CD4-positive, alpha-beta T cell (primary cell): ENCODE measurements at regions of chr1 and their contacts with region 1.

Region 1: GRCh38 chr1:64539781-64540218 is 69.9 kb downstream of the CACHD1 start:
- DNase-seq: peak in 2 of 14 experiments; percentile 12 to 31
- ATAC-seq: no peak
- H3K4me3 ChIP-seq: no peak overlapping the region
- H3K4me3 Mint-ChIP-seq: no peak overlapping the region
- H3K27ac ChIP-seq: no peak overlapping the region
- H3K27ac Mint-ChIP-seq: peak overlapping the region; percentile 82
- H3K4me1 ChIP-seq: peaks cover 13% of the 10 kb centered on the region
- H3K4me1 Mint-ChIP-seq: peaks cover 70% of the 10 kb centered on the region
- H3K27me3 ChIP-seq: no peaks in the 10 kb centered on the region
- H3K27me3 Mint-ChIP-seq: no peaks in the 10 kb centered on the region
- CTCF ChIP-seq: no peak

Region 2: DNA sequence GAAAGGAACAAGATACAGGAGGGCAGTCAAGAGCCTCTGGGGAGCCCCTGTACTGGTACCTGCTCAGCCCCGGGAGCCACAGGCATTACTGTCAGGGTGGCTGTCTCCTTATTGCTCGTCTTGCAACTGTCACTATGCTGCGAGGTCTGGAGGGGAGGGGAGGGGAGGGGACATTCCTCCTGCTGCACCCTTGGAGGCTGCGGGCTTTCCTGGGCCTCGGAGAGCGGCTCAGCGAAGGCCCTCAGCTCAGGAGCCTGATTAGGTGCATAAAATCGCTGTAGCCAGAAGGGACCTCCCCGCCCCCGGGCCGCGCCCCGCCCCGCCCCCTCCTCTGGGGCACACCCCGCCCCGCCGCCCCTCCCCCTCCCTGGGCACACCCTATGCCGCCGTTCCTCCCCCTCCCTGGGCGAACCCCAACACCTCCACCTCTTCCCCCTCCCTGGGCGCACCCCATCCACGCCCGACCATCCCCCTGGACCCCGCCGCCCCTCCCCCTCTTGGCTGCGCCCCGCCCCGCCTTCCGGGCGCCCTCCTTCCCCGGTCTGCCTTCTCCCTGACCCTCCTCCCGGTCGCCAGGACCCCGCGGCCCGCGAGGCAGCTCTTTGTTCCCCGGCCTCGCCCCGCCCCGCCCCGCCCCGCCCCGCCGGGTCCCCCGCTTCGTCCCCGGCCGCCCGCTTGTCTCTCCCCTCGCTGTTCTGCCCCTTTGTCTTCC is 34.4 kb before region 1 on chr1:
- CTCF ChIA-PET with region 1: no interaction called
- POLR2A ChIA-PET with region 1: interaction called, 5 read pairs
- intact Hi-C with region 1: loop called in 1 of 2 experiments (anchors 5 kb)
- DNase-seq: peak; percentile 14 to 75 (median 53)
- ATAC-seq: peak; percentile 63
- H3K4me3 ChIP-seq: peak overlapping the region; percentile 47
- H3K4me3 Mint-ChIP-seq: peak overlapping the region; percentile 90
- H3K27ac ChIP-seq: peak overlapping the region in 1 of 2 donors; percentile 2
- H3K27ac Mint-ChIP-seq: peak overlapping the region; percentile 82
- H3K4me1 ChIP-seq: peaks cover 12% of the 10 kb centered on the region
- H3K4me1 Mint-ChIP-seq: peaks cover 60% of the 10 kb centered on the region
- H3K27me3 ChIP-seq: peaks cover 0 to 4% of the 10 kb centered on the region in 2 experiments
- H3K27me3 Mint-ChIP-seq: peaks cover 5% of the 10 kb centered on the region
- CTCF ChIP-seq: no peak